ENCODE measurements at regions of chr14 and their contacts with region 1.

Region 1: GRCh38 chr14:90399541-90400444 is 3.0 kb downstream of the CALM1 start:
- DNase-seq: peak; percentile 84 to 98 (median 90)

Region 2: GRCh38 chr14:90331497-90332435 is 68.0 kb before region 1 on chr14 and contains the start of gene NRDE2:
- intact Hi-C with region 1: loop called (anchors 5 kb)
- DNase-seq: peak; percentile 96 to 99 (median 98)

Region 3: GRCh38 chr14:90419200-90419599 is 19.4 kb after region 1 on chr14:
- intact Hi-C with region 1: no loop called
- DNase-seq: peak in 8 of 10 donors; percentile 33 to 94 (median 64)

Region 4: DNA sequence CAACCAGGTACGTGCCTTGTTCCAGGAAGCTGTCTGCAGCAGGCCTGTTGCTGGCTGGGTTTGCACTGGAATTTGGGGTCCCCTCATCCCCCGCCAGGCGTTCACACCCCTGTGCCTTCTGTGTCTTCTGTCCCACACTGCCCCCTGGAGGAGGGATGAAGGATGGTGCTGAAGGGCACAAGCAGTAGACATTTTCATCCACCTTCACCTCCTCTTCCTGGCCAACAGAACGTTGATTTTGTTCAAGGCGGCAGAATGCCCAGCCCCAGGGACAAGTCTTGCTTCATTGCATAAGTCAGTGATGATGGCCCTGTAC is 119.1 kb after region 1 on chr14:
- intact Hi-C with region 1: loop called (anchors 5 kb)
- DNase-seq: peak in 3 of 10 donors; percentile 50 to 86 (median 72)

Region 5: DNA sequence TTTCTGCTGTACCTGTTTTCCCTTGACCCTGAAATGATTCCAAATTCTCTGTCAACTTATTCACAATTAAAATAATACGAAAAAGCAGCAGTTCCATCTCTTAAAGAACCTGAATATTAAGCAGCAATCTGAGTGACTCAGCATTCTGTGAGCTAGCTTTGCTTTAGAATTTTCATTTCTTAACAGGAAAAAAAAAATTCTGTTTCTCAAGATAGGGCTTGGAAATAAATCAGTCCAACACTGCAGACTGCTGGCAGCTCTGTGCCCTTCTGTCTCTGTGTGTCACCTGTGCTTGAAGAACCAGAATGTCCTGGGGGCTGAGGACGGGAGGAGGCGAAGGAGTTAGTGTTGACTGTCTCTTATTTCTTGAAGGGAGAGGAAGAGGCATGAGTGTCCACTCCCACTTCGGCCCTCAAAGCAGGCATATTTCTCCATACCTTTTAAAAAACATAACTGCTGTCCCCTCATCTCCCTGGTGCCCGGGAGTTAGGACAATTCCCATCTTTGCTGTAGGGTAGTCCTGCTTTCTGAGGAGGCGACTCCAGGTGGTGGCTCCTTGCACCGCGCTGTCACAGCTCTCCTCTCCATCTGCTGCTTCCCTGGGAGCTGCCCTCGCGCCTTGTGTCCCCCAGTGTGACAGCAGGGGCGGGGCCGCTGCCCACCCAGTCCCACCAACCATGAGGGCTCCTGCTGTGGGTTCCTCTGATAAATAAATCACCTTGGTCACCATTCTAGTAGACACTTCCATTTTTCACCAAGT is 200.1 kb after region 1 on chr14:
- intact Hi-C with region 1: loop called (anchors 1 kb)
- DNase-seq: peak in 3 of 10 donors; percentile 37 to 89 (median 55)

Region 6: GRCh38 chr14:90758028-90758889 is 358.5 kb after region 1 on chr14:
- intact Hi-C with region 1: loop called (anchors 1 kb)
- DNase-seq: peak; percentile 71 to 98 (median 80)